AG04450 (cell line): ENCODE measurements at regions of chr11 and their contacts with region 1.

Region 1: DNA sequence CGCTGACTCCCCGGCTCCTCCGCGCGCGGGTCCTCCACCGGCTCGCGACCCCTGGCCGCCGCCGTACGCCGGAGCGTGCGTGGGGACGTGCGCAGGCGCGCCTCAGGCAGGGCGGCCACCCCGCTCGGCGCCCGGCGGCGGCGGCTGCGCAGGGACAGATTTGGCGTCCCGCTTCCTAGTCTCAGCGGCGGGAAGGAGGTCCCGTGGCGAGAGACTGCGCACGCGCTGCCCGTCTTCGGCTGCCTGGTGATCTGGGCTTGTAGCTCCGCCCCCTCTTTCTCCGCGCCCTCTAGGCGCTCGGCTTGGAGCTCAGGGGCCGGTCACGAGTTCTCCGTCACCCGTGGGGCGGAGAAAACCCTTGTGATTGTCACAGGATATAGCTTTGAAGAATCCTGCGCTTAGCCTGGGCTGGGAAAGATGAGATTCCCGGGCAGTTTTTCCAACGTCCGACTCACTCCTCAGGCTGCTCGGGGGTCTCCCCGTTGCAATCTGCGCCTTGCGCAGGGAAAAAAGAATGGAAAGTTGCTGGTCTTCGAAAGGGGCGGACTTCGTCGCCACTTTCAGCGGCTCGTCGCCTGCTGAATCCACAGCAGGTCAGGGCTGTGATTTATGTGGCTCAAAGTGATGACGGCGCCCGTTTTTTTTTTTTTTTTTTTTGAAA is at the start of gene PATL1:
- DNase-seq: peak; percentile 95
- H3K4me3 ChIP-seq: peak within 1 kb of the TSS; percentile 85
- H3K27ac ChIP-seq: peak within 1 kb of the TSS; percentile 99
- H3K27me3 ChIP-seq: no peaks in the 10 kb centered on the region
- CTCF ChIP-seq: no peak
- polyA plus RNA-seq, gene PATL1: 36.4 and 43.9 TPM in 2 replicates

Region 2: DNA sequence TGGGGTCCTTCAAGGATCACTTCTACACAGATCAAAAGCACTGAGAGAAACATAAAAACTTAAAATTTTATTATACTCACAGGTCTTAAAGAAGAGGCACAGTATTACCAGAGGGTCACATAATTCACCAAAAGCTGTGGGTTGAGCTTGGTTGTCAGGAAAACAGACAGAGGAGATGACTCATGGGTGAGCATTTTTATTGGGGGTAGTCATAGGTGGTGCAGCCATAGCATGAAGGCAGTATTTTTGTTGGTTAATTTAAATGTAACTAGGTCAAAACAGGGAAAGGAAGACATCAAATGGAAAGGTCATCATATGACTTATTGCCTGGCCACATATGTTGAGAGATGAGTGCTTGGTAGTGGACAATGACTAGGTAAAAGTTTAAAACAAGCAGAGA is 1334.4 kb before region 1 on chr11:
- CTCF ChIA-PET with region 1: no interaction called
- POLR2A ChIA-PET with region 1: interaction called, 15 read pairs
- DNase-seq: peak; percentile 34
- H3K4me3 ChIP-seq: no peak overlapping the region
- H3K27ac ChIP-seq: no peak overlapping the region
- H3K27me3 ChIP-seq: no peaks in the 10 kb centered on the region
- CTCF ChIP-seq: no peak